ENCODE measurements at regions of chrX and their contacts with region 1.

Region 1: DNA sequence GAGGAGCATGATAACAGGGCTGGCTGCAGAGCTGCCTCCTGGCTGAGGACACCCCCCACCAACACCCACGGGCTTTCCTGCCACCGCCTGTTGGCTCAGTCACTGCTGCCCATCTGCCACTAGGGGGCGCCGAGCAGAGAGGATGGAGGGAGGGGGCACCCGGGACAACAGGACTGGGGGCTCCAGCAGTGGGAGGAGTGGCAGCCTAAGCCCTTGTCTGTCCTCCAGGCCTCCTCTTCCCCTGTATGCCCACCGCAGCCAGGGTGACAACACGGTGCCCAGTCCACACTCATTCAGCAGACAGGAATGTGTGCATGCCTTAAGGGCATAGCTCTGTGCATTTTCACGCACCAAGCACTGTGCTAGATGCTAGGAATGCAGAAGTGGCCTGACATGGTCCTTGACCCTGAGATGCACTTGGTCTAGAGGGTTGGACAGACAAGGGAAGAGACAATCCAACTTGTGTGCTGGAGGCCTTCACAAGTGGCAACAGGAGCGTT is 149.9 kb downstream of the AMMECR1 start:
- DNase-seq: peak; percentile 45
- H3K4me3 ChIP-seq: no peak overlapping the region
- H3K27ac ChIP-seq: peak overlapping the region; percentile 79
- H3K4me1 ChIP-seq: peaks cover 9% of the 10 kb centered on the region
- H3K27me3 ChIP-seq: no peaks in the 10 kb centered on the region

Region 2: DNA sequence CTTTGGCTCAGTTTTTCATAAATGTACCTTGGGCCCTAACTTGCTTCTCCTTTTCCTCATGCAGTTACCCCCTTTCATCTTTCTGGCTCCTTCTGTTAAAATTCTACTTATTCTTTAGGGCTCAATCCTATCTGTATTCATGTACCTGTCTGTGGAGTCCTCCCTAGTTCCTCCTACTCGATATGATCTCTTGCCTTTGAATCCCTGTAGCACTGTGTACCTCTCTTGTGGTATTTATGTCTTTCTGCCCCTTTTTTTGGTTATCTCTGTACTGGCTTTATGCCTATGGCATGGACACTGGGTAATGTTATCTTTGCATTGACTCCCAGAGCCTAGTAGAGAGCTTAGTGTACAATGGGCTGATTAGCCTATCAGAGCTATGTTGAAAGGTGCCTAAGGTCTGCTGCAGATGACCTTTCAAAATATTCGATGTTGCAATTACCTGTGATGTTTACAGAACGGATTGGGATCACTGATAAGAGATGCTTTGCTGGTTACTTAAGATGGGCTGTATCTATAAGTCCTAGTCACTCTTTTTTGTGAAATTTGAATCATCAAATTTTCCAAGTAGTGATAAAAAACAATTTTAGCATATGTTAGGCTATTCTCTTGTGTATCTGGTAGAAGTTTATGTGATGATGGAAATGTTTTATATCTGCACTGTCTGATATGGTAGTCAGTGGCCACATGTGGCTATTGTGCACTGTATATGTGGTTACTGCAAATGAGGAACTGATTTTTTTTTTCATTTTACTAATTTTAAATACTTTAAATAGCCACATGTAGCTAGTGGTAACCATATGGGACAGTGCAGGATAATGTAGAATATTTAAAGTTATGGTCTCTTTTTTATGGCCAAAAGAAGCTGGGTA is 131.6 kb before region 1 on chrX:
- in situ Hi-C with region 1: no loop called
- DNase-seq: no peak
- H3K4me3 ChIP-seq: no peak overlapping the region
- H3K27ac ChIP-seq: no peak overlapping the region
- H3K4me1 ChIP-seq: no peaks in the 10 kb centered on the region
- H3K27me3 ChIP-seq: no peaks in the 10 kb centered on the region

Region 3: DNA sequence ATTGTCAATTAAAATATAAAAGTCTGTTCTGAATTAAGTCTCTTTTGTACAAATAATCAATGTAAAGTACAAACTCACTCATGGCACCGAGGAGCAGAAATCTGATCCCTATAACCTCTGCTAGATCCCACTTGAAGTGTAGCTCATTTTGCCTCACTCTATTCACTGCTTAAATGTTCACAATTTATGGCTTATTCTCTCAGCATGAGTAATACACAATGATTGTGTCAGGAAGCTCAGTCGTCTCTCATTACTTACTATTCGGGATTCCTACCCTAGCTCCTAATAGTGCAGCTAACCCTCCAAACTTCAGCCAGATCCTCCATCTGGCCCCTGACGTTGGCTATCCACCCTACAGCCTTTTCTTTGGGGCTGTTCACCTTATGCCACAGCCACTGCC is 154.6 kb after region 1 on chrX:
- in situ Hi-C with region 1: loop called (anchors 10 kb)
- DNase-seq: peak; percentile 56
- H3K4me3 ChIP-seq: 0 out of 2 replicates have a peak overlapping the region, but pooled peaks have one; percentile 29
- H3K27ac ChIP-seq: 0 out of 2 replicates have a peak overlapping the region, but pooled peaks have one; percentile 18
- H3K4me1 ChIP-seq: peaks cover 11% of the 10 kb centered on the region; the same call in 1 of the 2 replicates
- H3K27me3 ChIP-seq: no peaks in the 10 kb centered on the region

Region 4: GRCh38 chrX:111322231-111322855 is 1154.3 kb after region 1 on chrX:
- in situ Hi-C with region 1: no loop called
- DNase-seq: no peak
- H3K4me3 ChIP-seq: no peak overlapping the region
- H3K27ac ChIP-seq: no peak overlapping the region
- H3K4me1 ChIP-seq: no peaks in the 10 kb centered on the region
- H3K27me3 ChIP-seq: no peaks in the 10 kb centered on the region

Measured in GM23248 (cell line).